A673 (cell line): ENCODE measurements at regions of chr6 and their contacts with region 1.

Region 1: GRCh38 chr6:79777713-79778579 is 146.8 kb downstream of the SH3BGRL2 start:
- DNase-seq: peak; percentile 81
- H3K4me3 ChIP-seq: peak overlapping the region; percentile 22
- H3K27ac ChIP-seq: no peak overlapping the region
- H3K4me1 ChIP-seq: no peaks in the 10 kb centered on the region
- H3K27me3 ChIP-seq: no peaks in the 10 kb centered on the region
- CTCF ChIP-seq: peak; percentile 99

Region 2: DNA sequence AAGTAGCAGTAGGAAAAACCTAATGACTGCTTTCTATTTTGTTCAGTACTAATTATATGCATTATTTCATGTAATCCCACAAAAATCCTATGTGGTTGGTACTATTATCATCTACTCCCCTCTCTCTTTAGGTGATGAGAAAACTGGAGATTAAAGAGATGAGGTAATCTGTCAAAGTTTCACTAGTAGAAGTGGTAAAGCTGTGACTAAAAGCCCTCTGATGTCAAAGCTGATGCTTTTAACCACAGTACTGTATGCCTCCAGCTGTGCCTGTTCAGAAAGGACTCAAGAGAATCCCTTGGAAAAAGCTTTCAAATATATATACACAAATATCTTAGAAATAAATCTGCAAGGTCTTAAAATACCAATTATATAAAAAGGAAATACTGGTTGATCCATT is 737.9 kb before region 1 on chr6:
- CTCF ChIA-PET with region 1: no interaction called
- POLR2A ChIA-PET with region 1: no interaction called
- intact Hi-C with region 1: no loop called
- DNase-seq: peak; percentile 4
- H3K4me3 ChIP-seq: no peak overlapping the region
- H3K27ac ChIP-seq: no peak overlapping the region
- H3K4me1 ChIP-seq: no peaks in the 10 kb centered on the region
- H3K27me3 ChIP-seq: no peaks in the 10 kb centered on the region
- CTCF ChIP-seq: no peak

Region 3: DNA sequence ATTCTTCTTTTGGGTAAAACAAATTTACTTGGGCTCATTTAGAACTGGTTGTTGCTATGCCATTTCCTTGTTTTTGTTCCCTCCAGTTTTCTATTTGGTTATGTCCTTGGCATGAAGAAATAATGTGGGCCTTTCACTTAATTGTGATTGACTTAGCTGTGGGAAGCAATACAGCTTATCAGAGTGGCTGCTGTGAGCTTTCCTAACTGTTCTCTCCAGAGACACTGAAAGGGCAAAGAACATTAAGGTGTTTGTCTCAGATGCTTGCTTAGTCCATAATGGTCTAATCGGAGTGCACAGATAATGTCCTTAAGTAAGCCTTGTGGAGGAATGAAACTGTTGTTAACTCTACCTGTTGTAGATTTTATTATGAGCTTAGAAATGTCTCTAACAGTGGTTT is 90.2 kb before region 1 on chr6:
- CTCF ChIA-PET with region 1: no interaction called
- POLR2A ChIA-PET with region 1: no interaction called
- intact Hi-C with region 1: no loop called
- DNase-seq: no peak
- H3K4me3 ChIP-seq: no peak overlapping the region
- H3K27ac ChIP-seq: no peak overlapping the region
- H3K4me1 ChIP-seq: peaks cover 13% of the 10 kb centered on the region
- H3K27me3 ChIP-seq: no peaks in the 10 kb centered on the region
- CTCF ChIP-seq: no peak

Region 4: GRCh38 chr6:79813854-79814709 is 36.1 kb after region 1 on chr6:
- CTCF ChIA-PET with region 1: no interaction called
- POLR2A ChIA-PET with region 1: no interaction called
- intact Hi-C with region 1: loop called (anchors 1 kb)
- DNase-seq: peak; percentile 70
- H3K4me3 ChIP-seq: no peak overlapping the region
- H3K27ac ChIP-seq: no peak overlapping the region
- H3K4me1 ChIP-seq: peaks cover 29% of the 10 kb centered on the region
- H3K27me3 ChIP-seq: no peaks in the 10 kb centered on the region
- CTCF ChIP-seq: peak; percentile 93

Region 5: GRCh38 chr6:79869600-79870084 is 91.7 kb after region 1 on chr6:
- CTCF ChIA-PET with region 1: interaction called, 12 read pairs
- POLR2A ChIA-PET with region 1: no interaction called
- intact Hi-C with region 1: loop called (anchors 1 kb)
- DNase-seq: peak; percentile 74
- H3K4me3 ChIP-seq: peak overlapping the region; percentile 14
- H3K27ac ChIP-seq: no peak overlapping the region
- H3K4me1 ChIP-seq: no peaks in the 10 kb centered on the region
- H3K27me3 ChIP-seq: no peaks in the 10 kb centered on the region
- CTCF ChIP-seq: peak; percentile 94